Gastrocnemius medialis (tissue), 4 donors: ENCODE measurements at regions of chr17 and their contacts with region 1.

Region 1: DNA sequence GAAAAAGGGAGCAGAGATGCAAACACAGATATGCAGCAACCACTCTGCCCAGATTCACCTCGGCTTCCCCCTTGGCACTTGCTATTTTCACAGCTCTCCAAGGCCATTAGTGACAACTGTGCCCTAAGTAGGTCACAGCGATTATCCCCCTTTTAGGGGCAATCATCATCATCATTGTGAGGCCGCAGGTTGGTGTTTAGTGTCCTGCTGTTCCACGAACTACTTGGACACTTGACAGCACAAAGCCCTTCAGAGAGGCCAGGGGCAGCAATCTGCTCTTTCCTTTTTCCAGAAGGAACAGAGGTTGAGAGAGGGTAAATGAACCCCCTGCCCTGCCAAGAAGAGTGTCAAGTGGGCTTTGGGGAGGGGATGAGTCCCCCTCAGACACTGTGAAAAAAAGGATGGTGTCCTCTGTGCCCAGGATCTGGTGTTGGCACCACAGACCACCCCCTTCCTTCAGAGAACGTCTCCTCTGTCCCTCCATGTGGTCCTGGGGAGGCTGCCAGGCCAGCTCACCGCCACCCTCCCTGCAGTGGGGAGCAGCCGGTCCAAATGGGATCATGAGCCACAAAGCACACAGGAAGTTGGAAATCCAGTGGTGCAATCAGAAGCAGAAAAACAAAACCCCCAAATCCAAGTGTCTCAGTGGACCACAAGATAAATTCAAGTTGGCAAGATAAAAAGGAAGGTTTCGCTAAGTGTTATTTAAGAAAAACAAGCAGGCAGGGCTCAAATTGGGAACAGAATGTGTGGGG is 78.4 kb upstream of the MED9 start:
- DNase-seq: peak; percentile 42 to 65
- ATAC-seq: peak; percentile 71 to 77
- H3K4me3 ChIP-seq: no peak overlapping the region
- H3K27ac ChIP-seq: peak overlapping the region; percentile 14 to 64 (median 58)
- H3K4me1 ChIP-seq: no peaks in the 10 kb centered on the region
- H3K27me3 ChIP-seq: peaks cover 0 to 4% (median 0%) of the 10 kb centered on the region in 3 donors
- CTCF ChIP-seq: no peak
- POLR2A ChIP-seq: no peak

Region 2: DNA sequence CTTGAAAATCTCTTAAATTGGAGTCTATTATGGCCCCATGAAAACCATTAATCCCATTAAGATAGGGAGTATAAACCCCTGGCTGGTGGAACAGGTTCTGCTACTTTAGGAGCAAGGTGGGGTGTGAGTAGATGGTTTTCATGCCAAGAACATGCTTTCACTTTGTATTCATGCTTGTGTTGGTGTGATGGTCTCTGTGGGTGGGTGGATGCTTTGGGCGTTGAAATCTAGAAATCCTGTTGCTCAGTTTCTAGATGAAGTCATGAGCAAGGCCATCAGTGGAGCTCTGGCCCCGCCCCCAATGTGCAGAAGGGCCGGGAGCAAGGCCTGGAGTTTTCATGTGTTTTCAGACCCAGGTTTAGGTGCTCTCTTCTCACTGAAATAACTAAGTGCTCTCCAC is 212.3 kb before region 1 on chr17:
- in situ Hi-C with region 1: no loop called
- intact Hi-C with region 1: no loop called
- DNase-seq: no peak
- ATAC-seq: no peak
- H3K4me3 ChIP-seq: no peak overlapping the region
- H3K27ac ChIP-seq: peak overlapping the region in 2 of 4 donors; percentile 0 to 7
- H3K4me1 ChIP-seq: peaks cover 17 to 19% of the 10 kb centered on the region in 2 donors
- H3K27me3 ChIP-seq: no peaks in the 10 kb centered on the region
- CTCF ChIP-seq: no peak
- POLR2A ChIP-seq: no peak

Region 3: DNA sequence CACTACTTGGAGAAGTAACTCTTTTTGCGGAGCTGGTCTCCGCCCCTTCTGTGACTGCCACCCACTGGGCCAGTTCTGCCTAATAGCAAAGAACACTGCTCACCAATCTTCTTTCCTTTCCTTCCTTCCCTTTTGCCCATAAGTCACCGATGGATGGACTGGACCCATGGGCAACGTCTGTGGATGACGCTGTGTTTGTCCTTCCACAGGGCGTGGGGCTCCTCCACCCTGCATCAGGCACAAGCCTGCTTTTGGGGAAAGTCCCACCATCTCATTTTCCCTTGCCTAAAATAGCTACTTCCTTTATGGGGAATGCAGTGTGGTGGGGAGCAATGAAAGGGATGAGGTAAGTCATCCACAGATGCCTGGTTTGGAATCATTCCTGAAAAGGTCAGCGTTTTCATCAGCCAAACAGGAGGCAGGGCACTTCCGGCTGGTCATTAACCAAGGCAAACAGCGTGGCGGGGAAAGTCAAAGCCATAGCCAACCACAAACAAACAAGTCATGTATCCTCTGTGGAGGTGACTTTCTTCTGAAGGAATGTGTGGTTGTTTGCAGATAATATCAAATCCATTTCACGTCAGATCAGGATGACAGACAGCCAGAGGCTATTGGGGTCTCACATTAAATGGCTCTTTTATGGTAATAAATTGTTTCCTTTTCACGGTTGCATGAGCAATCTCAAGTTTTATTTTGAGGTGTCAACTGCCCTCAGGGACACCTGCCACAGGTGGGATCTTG is 47.7 kb after region 1 on chr17:
- in situ Hi-C with region 1: no loop called
- intact Hi-C with region 1: loop called (anchors 5 kb)
- DNase-seq: peak in 1 of 2 donors; percentile 48
- ATAC-seq: peak; percentile 71 to 72
- H3K4me3 ChIP-seq: no peak overlapping the region
- H3K27ac ChIP-seq: peak overlapping the region; percentile 24 to 61 (median 40)
- H3K4me1 ChIP-seq: peaks cover 7 to 10% of the 10 kb centered on the region in 2 donors
- H3K27me3 ChIP-seq: peaks cover 0 to 10% (median 2%) of the 10 kb centered on the region in 3 donors
- CTCF ChIP-seq: no peak
- POLR2A ChIP-seq: peak in 1 of 2 donors; percentile 10